Motor neuron (in vitro differentiated cells): ENCODE measurements at regions of chr6 and their contacts with region 1.

Region 1: GRCh38 chr6:10478187-10479040 is 42.7 kb upstream of the GCNT2 start:
- ATAC-seq: peak in 3 of 8 experiments; percentile 34 to 52 (median 36)
- H3K4me3 ChIP-seq: no peak overlapping the region
- H3K27ac ChIP-seq: no peak overlapping the region
- H3K4me1 ChIP-seq: no peaks in the 10 kb centered on the region

Region 2: DNA sequence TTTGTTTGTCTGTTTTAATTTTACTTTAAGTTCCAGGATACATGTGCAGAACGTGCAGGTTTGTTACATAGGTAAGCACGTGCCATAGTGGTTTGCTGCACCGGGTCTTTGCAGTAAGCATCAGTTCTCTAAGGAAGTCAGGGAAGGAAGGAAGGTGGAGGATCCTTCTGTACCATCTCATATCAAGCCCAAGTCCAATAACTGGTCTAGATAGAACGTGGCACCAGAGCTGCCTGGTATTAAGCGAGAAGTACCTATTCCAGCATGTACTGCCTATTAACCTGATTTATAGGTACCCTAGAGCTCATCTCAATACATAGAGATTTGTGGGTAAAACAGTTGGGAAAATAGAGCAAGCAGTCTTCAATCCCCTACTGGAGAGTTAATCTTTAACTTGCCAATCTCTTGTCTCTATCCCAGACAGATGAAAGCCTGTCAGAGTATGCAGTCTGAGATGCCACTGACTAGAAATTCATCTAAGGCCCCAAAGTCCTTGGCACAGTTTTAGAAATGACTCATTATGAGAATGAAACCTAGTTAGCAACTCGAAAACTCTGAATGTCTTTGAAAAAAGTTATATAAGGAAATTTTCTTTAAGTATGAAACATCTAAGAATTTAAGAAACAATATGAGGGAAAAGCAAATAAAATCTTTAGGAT is 208.5 kb before region 1 on chr6:
- in situ Hi-C with region 1: no loop called
- ATAC-seq: no peak
- H3K4me3 ChIP-seq: no peak overlapping the region
- H3K27ac ChIP-seq: no peak overlapping the region
- H3K4me1 ChIP-seq: peaks cover 13 to 27% of the 10 kb centered on the region in 2 donors

Region 3: GRCh38 chr6:10694302-10695085 is 216.1 kb after region 1 on chr6 and contains the starts of genes C6orf52 and PAK1IP1:
- in situ Hi-C with region 1: loop called in 1 of 9 experiments (anchors 25 kb)
- ATAC-seq: peak; percentile 95 to 98 (median 97)
- H3K4me3 ChIP-seq: peak within 1 kb of the TSS; percentile 56 to 89 (median 76)
- H3K27ac ChIP-seq: peak within 1 kb of the TSS; percentile 100
- H3K4me1 ChIP-seq: peaks cover 7 to 23% of the 10 kb centered on the region in 2 donors
- total RNA-seq, gene C6orf52: 3.6 to 15.7 (median 11.3) TPM in 6 of 8 experiments, not detected in the others
- total RNA-seq, gene PAK1IP1: 21.5 to 28.3 (median 25.8) TPM

Region 4: DNA sequence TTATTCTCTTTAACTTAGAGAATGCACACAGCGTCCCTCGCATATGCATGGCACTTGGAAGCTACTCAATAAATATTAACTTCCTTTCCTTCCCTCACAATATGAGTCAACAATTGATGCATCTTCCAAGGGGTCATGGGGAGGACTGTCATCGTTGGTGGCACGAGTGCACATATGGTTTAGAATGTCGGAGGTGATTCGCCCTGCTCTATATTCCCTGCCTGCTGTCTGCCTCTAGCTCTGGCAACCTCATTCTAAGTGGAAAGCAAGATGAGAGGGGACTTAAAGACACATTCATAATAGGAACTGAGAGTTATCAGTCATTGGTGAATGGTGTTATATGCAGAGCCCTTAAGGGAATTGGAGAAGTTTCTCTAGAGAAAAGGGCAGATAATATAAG is 315.3 kb after region 1 on chr6:
- in situ Hi-C with region 1: loop called in 3 of 9 experiments (anchors 10 to 25 kb)
- ATAC-seq: peak in 3 of 8 experiments; percentile 28 to 41 (median 33)
- H3K4me3 ChIP-seq: no peak overlapping the region
- H3K27ac ChIP-seq: no peak overlapping the region
- H3K4me1 ChIP-seq: no peaks in the 10 kb centered on the region